A549 (cell line): ENCODE measurements at regions of chr19 and their contacts with region 1.

Region 1: DNA sequence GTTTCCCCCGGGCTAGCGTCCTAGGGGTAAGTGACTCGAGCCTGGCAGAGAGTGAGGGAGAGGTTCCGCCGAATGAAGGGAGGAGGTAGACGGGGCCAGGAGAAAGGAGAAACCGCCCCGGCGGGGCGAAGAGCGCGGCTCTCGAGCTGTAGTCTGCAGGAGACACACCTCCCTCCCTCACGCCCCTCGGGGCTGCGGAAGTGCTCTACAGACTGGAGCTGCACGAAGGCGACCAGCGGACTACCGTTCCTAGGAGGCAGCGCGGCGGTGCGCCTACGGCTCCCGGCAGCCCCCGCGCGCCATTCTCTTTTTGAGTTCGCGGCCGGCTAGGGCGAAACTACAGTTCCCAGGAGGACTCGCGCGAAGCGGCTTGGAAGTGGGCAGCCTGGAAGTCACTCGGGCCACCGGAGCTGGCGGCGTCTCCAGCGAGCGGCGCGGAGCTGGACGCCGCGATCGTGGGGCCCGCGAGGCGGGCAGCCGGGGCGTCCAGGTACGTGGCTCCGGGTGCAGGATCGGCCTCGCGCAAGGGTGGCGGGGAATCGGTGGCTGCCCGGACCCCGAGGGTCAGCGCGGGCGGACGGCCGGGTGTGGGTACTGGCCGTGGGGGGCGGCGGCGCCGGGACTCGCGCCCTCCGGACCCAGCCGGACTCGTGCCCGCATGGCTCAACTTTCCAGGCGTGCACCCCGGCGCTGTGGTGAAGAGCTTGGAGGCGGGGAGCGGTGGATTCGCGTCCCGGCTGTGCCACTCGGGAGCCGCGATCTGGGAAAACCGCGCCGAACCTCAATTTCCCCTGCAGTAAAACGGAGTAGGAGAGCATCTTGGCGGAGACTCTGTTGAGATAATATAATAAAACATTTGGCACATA is at the start of gene SIPA1L3:
- DNase-seq: peak; percentile 99
- ATAC-seq: peak; percentile 91 to 97
- H3K4me3 ChIP-seq: peak within 1 kb of the TSS; percentile 69
- H3K27ac ChIP-seq: peak within 1 kb of the TSS; percentile 83 to 87
- H3K4me1 ChIP-seq: peaks cover 30% of the 10 kb centered on the region
- CTCF ChIP-seq: no peak; the same call in 2 of the 3 replicates
- EP300 ChIP-seq: no peak; a peak in 1 of 5 replicates
- POLR2A ChIP-seq: peak; percentile 74
- RAD21 ChIP-seq: peak; percentile 16 to 45
- polyA plus RNA-seq, gene SIPA1L3: 28.9 and 47.8 TPM in 2 replicates

Region 2: GRCh38 chr19:37941782-37942515 is 34.8 kb after region 1 on chr19:
- CTCF ChIA-PET with region 1: interaction called, 40 read pairs
- POLR2A ChIA-PET with region 1: interaction called, 7 read pairs
- DNase-seq: peak; percentile 85 to 98
- ATAC-seq: peak; percentile 70 to 84
- H3K4me3 ChIP-seq: peak overlapping the region; percentile 4; the same call in 2 of the 3 replicates
- H3K27ac ChIP-seq: peak overlapping the region; percentile 80 to 86
- H3K4me1 ChIP-seq: peaks cover 61% of the 10 kb centered on the region
- CTCF ChIP-seq: peak; percentile 18; the same call in 2 of the 3 replicates
- EP300 ChIP-seq: peak; percentile 79 to 92; a peak in 4 of 5 replicates
- POLR2A ChIP-seq: no peak
- RAD21 ChIP-seq: peak in 1 of 2 experiments; percentile 39; a peak in 4 of 5 replicates

Region 3: GRCh38 chr19:38013913-38014575 is 106.9 kb after region 1 on chr19:
- CTCF ChIA-PET with region 1: interaction called, 38 read pairs
- POLR2A ChIA-PET with region 1: interaction called, 8 read pairs
- DNase-seq: no peak
- ATAC-seq: peak in 1 of 2 experiments; percentile 27; a peak in 1 of 6 replicates
- H3K4me3 ChIP-seq: no peak overlapping the region
- H3K27ac ChIP-seq: no peak overlapping the region
- H3K4me1 ChIP-seq: no peaks in the 10 kb centered on the region; the same call in 2 of the 3 replicates
- CTCF ChIP-seq: no peak
- EP300 ChIP-seq: no peak
- POLR2A ChIP-seq: no peak
- RAD21 ChIP-seq: no peak

Region 4: GRCh38 chr19:38095411-38096308 is 188.6 kb after region 1 on chr19:
- CTCF ChIA-PET with region 1: interaction called, 408 read pairs
- POLR2A ChIA-PET with region 1: no interaction called
- DNase-seq: peak; percentile 86 to 87
- ATAC-seq: peak; percentile 87 to 89
- H3K4me3 ChIP-seq: no peak overlapping the region
- H3K27ac ChIP-seq: peak overlapping the region in 1 of 2 experiments; percentile 35; a peak in 1 of 6 replicates
- H3K4me1 ChIP-seq: no peaks in the 10 kb centered on the region
- CTCF ChIP-seq: peak; percentile 97
- EP300 ChIP-seq: no peak
- POLR2A ChIP-seq: peak; percentile 8; the same call in 1 of the 2 replicates
- RAD21 ChIP-seq: peak; percentile 82 to 83

Region 5: DNA sequence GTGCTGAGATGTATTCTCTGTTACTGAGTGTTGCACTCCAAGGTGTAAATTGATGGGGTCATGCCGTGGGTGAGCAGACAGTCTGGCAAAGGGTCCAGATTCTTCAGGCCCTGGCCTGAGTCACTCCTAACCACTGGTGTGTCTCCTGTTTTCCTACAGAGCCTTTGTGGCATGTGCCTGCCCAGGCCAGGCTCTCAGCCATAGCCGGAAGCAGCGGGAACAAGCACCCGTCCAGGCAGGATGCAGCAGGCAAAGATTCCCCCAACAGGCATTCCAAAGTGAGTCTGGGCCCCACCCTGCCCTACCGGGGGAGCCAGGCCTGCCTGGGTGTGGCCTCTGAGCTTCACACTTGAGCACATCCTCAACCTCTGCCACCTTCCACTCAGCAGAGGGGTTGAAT is 255.0 kb after region 1 on chr19:
- CTCF ChIA-PET with region 1: interaction called, 18 read pairs
- POLR2A ChIA-PET with region 1: no interaction called
- DNase-seq: no peak
- ATAC-seq: no peak
- H3K4me3 ChIP-seq: no peak overlapping the region
- H3K27ac ChIP-seq: no peak overlapping the region
- H3K4me1 ChIP-seq: no peaks in the 10 kb centered on the region
- CTCF ChIP-seq: no peak
- EP300 ChIP-seq: no peak
- POLR2A ChIP-seq: no peak
- RAD21 ChIP-seq: no peak

Region 6: DNA sequence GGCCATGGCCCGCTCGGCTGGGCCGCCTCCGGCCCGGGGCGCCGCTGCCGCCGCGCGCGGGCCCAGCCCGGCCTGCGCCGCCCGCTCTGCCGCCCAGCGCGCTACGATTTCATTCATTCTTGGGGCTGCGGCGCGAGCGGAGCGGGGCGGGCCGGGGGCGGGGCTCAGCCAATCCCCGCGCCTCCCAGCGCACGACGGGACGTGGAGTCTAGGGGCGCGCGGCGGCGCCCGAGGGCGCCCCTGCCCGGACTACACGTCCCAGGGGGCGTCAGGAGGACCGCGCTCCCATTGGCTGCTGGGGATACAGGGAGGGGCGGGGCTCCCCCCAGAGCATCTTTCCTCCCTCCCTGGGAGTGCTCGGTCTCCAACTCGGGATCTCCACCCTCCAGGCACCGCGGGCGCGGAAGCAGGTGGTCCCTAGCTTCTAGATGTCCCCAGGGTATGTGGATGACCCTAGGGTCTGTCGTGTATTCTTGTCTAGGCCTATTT is 322.5 kb after region 1 on chr19:
- CTCF ChIA-PET with region 1: interaction called, 187 read pairs
- POLR2A ChIA-PET with region 1: interaction called, 4 read pairs
- DNase-seq: peak; percentile 89 to 93
- ATAC-seq: peak; percentile 49 to 79
- H3K4me3 ChIP-seq: peak overlapping the region; percentile 52
- H3K27ac ChIP-seq: peak overlapping the region in 1 of 2 experiments; percentile 67; a peak in 3 of 6 replicates
- H3K4me1 ChIP-seq: peaks cover 25% of the 10 kb centered on the region
- CTCF ChIP-seq: no peak
- EP300 ChIP-seq: no peak
- POLR2A ChIP-seq: no peak
- RAD21 ChIP-seq: no peak

Region 7: GRCh38 chr19:38335949-38336637 is 429.0 kb after region 1 on chr19:
- CTCF ChIA-PET with region 1: interaction called, 19 read pairs
- POLR2A ChIA-PET with region 1: interaction called, 3 read pairs
- DNase-seq: peak; percentile 99 to 100
- ATAC-seq: peak; percentile 82 to 92
- H3K4me3 ChIP-seq: peak overlapping the region; percentile 66
- H3K27ac ChIP-seq: peak overlapping the region; percentile 74 to 82
- H3K4me1 ChIP-seq: peaks cover 8% of the 10 kb centered on the region; the same call in 2 of the 3 replicates
- CTCF ChIP-seq: no peak
- EP300 ChIP-seq: no peak
- POLR2A ChIP-seq: no peak
- RAD21 ChIP-seq: no peak